Heart right ventricle (tissue), 16 donors: ENCODE measurements at regions of chr6 and their contacts with region 1.

Region 1: GRCh38 chr6:6927521-6928371 is 180.0 kb upstream of the RREB1 start:
- DNase-seq: peak; percentile 45 to 52
- ATAC-seq: peak; percentile 77 to 94 (median 89)
- H3K4me3 ChIP-seq: peak overlapping the region in 8 of 10 donors; percentile 26 to 54 (median 46)
- H3K27ac ChIP-seq: peak overlapping the region; percentile 22 to 84 (median 76)
- H3K4me1 ChIP-seq: peaks cover 0 to 27% (median 0%) of the 10 kb centered on the region in 9 donors
- H3K27me3 ChIP-seq: no peaks in the 10 kb centered on the region
- CTCF ChIP-seq: peak in 4 of 9 donors; percentile 35 to 46 (median 38)

Region 2: GRCh38 chr6:6840831-6841291 is 86.9 kb before region 1 on chr6:
- intact Hi-C with region 1: no loop called
- DNase-seq: no peak
- ATAC-seq: peak in 3 of 8 donors; percentile 29 to 42 (median 31)
- H3K4me3 ChIP-seq: no peak overlapping the region
- H3K27ac ChIP-seq: peak overlapping the region in 1 of 10 donors; percentile 10
- H3K4me1 ChIP-seq: peaks cover 0 to 15% (median 0%) of the 10 kb centered on the region in 9 donors
- H3K27me3 ChIP-seq: no peaks in the 10 kb centered on the region
- CTCF ChIP-seq: no peak

Region 3: DNA sequence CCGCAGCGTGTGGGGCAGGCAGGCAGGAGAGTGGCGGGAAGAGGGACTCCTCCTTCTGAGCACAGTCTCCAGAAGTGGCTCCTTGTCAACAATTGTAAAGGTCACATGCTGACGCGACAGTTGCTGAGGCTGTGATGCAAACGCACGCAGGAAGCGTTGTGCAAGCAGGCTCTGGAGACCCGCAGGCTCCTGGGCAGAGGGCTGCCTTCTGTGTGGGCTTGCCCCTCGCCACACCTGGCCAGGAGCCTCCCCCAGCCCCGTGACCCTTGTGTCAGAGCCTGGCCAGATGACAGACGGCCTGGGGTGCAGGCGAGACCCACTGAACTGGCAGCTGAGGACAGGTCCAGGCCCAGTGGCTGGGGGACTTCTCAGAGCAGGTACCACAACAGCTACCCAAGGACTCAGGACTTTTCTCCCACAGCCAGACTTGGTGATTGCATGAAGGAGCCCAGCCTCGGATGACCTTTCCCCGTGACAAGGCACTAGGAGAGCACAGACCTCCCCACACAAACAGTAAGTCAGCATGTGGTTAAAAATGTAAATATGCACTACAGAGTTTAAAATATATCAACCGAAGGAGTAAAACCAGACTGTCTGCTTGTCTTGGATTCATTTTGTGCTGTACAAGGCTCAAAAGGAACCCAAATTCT is 42.1 kb before region 1 on chr6:
- intact Hi-C with region 1: no loop called
- DNase-seq: peak; percentile 40 to 62
- ATAC-seq: peak; percentile 23 to 91 (median 74)
- H3K4me3 ChIP-seq: peak overlapping the region in 1 of 10 donors; percentile 31
- H3K27ac ChIP-seq: peak overlapping the region in 8 of 10 donors; percentile 25 to 93 (median 51)
- H3K4me1 ChIP-seq: peaks cover 0 to 68% (median 11%) of the 10 kb centered on the region in 9 donors
- H3K27me3 ChIP-seq: no peaks in the 10 kb centered on the region
- CTCF ChIP-seq: no peak

Region 4: DNA sequence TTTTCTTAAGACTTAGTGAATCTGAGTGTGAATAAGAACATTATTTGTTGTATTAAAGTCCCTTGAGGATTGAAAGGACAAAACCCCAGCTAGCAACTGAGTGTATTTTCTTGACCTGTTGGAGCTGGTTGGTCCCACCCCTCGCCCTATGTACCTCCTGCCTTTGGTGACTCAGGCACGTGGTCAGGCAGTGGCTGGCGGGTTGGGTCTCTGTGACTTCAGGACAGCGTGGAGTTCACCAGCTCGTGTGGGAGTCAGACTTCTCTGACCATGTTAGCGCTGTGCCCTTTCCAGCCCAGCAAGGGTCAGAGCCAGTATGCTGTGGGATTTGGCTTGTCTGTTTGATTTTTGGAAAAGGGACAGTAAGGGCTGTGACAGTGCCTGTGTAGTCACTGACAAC is 291.6 kb after region 1 on chr6:
- intact Hi-C with region 1: loop called in 1 of 10 experiments (anchors 10 kb)
- DNase-seq: peak in 1 of 2 donors; percentile 48
- ATAC-seq: peak in 6 of 8 donors; percentile 23 to 49 (median 30)
- H3K4me3 ChIP-seq: no peak overlapping the region
- H3K27ac ChIP-seq: peak overlapping the region in 9 of 10 donors; percentile 19 to 82 (median 64)
- H3K4me1 ChIP-seq: peaks cover 26 to 87% (median 77%) of the 10 kb centered on the region in 9 donors
- H3K27me3 ChIP-seq: no peaks in the 10 kb centered on the region
- CTCF ChIP-seq: no peak